HepG2 (cell line): ENCODE measurements at regions of chr1 and their contacts with region 1.

Region 1: DNA sequence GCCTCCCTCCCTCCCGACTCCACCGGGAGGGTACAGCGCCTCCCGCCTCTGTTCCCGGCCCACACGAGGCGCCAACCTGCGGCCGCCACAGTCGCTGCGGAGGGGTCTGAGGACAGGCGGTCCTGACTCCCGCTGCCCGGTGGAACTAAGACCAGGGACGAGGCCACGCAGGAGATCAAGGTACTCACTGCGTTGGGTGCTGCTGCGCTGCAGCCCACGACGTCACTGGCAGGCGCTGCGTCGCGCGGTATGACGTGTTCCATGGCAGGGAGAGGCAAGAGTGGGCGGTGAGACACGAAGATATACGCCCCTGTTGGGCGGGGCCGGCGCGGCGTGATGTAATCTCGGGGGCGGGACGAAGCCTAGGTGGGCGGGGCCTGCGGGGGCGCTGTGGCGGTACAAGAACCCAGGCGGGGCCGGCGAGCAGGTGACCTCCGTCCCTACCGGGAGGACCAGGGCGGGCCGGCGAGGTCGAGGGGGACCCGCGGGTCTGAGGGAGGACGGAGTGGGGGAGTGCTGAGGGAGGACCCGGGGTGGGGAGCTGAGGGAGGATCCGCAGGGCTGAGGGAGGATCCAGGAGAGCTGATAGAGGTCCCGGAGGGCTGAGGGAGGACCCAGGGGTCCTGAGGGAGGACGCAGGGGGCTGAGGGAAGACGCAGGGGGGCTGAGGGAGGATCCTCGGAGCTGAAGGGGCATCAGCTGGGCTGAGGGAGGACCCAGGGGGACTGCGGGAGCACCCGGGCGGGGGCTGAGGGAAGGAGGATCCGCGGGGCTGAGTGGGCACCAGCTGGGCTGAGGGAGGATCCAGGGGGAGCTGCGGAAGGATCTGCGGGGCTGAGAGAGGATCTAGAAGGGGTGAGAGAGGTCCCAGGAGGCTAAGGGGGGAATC is at the start of gene MRPL55:
- DNase-seq: peak; percentile 92
- ATAC-seq: peak; percentile 80
- H3K4me3 ChIP-seq: peak within 1 kb of the TSS; percentile 90 to 99 (median 97)
- H3K27ac ChIP-seq: peak within 1 kb of the TSS; percentile 90
- H3K4me1 ChIP-seq: peaks cover 34% of the 10 kb centered on the region
- H3K27me3 ChIP-seq: no peaks in the 10 kb centered on the region; a peak in 1 of 5 replicates
- CTCF ChIP-seq: peak; percentile 57
- EP300 ChIP-seq: peak; percentile 5 to 29; a peak in 1 of 4 replicates
- POLR2A ChIP-seq: peak in 1 of 2 experiments; percentile 95; a peak in 2 of 4 replicates
- RAD21 ChIP-seq: no peak
- total RNA-seq, gene MRPL55: 92.9 and 97.9 TPM in 2 replicates

Region 2: DNA sequence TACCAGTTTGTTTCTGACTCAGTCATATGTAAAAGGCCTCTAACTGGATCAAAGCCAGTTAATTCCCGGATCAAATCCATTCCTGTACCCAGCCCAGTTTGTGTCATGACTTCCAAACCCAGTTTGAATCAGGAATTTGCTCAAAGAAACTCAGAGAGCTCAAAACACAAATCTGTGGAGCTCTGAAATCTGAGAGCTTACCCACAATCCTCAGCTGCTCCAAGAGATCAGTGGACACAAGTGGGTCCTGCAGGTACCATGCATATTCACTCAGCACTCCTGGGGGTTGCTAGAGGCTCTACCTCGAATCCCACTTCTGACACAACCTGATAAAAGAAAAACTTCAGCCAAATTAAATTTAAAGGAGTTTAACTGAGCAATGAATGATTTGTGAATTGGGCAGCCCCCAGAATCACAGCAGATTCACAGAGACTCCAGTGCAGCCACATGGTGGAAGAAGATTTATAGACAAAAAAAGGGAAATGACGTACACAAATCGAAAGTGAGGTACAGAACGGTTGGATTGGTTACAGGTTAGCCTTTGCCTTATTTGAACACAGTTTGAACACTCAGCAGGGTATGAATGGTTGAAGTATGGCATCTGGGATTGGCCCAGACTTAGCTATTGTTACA is 11.7 kb after region 1 on chr1:
- CTCF ChIA-PET with region 1: no interaction called
- POLR2A ChIA-PET with region 1: interaction called, 12 read pairs
- in situ Hi-C with region 1: no loop called
- intact Hi-C with region 1: no loop called
- DNase-seq: no peak
- ATAC-seq: no peak
- H3K4me3 ChIP-seq: no peak overlapping the region
- H3K27ac ChIP-seq: no peak overlapping the region
- H3K4me1 ChIP-seq: peaks cover 14% of the 10 kb centered on the region
- H3K27me3 ChIP-seq: no peaks in the 10 kb centered on the region
- CTCF ChIP-seq: no peak
- EP300 ChIP-seq: no peak
- POLR2A ChIP-seq: no peak
- RAD21 ChIP-seq: no peak